GM12878 (cell line): ENCODE measurements at regions of chr19 and their contacts with region 1.

Region 1: DNA sequence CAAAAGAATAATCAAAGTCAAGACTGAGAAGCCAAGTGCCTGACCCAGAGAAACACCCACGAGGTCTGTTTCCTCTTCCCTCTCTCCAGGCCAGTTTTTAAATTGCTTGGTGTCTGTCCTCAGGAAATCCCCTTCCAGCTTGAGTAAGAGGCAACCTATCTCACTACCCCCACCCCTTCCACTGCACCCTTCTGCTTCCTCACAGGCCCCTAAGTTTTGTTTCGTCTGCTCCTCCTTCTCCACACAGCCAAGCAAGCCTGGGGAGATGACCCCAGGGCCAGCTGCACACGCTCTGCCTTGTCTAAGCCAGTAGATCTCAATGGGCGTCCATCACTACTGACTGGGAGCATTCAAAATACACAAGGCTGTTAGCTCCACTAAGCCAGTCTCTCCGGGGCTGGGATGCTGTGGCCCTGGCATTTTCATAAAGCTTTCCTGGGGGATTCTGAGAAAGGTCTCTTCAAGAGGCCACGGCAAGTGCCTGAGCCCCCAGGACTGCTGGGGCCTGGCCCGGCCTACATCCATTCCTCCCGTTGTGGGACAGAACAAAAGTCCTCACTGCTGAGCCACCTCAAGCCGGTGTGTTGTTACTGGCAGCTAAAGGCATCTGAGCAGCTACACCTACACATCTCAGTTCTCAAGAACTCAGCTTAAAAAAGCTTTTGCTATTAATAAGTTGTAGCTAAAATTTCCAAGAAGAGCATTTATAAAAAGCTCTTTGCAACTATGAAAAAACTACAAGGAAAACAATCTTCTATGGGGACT is 14.9 kb upstream of the IL4I1 start:
- DNase-seq: peak; percentile 83
- ATAC-seq: peak; percentile 86
- H3K4me3 ChIP-seq: peak overlapping the region; percentile 49; the same call in 1 of the 2 replicates
- H3K27ac ChIP-seq: peak overlapping the region; percentile 76
- H3K4me1 ChIP-seq: peaks cover 61% of the 10 kb centered on the region
- H3K27me3 ChIP-seq: no peaks in the 10 kb centered on the region
- CTCF ChIP-seq: no peak
- EP300 ChIP-seq: no peak
- POLR2A ChIP-seq: peak; percentile 68
- RAD21 ChIP-seq: 0 out of 2 replicates have a peak, but pooled peaks have one; percentile 1

Region 2: GRCh38 chr19:49889687-49890348 is 21.7 kb before region 1 on chr19:
- CTCF ChIA-PET with region 1: interaction called, 71 read pairs
- POLR2A ChIA-PET with region 1: interaction called, 116 read pairs
- RAD21 ChIA-PET with region 1: interaction called, 26 read pairs
- SMC1A ChIA-PET with region 1: interaction called, 110 read pairs
- in situ Hi-C with region 1: no loop called
- intact Hi-C with region 1: no loop called
- DNase-seq: no peak
- ATAC-seq: peak; percentile 31
- H3K4me3 ChIP-seq: peak overlapping the region; percentile 53; the same call in 1 of the 2 replicates
- H3K27ac ChIP-seq: peak overlapping the region; percentile 18; the same call in 1 of the 2 replicates
- H3K4me1 ChIP-seq: peaks cover 25% of the 10 kb centered on the region
- H3K27me3 ChIP-seq: no peaks in the 10 kb centered on the region
- CTCF ChIP-seq: peak; percentile 64 to 79 (median 71)
- EP300 ChIP-seq: no peak
- POLR2A ChIP-seq: no peak
- RAD21 ChIP-seq: peak; percentile 40

Region 3: DNA sequence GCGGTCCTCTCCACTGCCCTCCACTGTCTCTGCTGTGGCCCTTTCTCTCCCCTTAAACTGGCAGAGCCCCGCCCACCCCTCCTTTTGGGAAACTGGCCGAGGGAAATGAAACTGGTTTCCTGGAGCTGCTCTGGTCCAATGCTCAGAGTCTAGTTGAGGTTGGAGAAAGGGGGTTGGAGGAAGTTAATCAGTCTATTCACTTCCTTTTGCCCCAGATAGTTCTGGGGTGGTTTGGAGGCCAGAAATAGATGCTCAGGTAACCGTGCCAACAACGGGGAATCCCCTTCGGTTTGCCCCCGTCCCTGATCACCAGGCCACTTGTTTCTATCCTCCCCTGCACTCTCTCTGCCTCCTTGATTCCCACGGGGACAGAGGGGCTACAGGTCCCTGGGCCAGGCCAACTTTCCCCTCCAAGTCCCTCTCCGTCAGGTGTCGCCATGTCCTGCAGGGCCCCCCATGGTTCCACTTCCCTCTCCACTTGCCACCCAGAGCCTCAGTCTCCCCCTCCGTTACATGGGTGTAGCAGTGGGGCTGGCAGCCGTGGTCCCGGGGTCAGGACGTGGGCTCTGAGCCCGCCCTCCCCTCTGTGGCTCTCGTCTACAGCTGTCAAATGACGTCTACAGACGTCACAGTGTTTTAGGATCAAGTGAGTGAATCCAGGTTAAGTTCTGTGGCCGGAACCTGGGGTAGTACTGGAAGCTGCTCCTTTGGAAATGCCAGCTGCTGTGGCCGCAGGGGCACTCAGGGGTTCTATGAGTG is 14.5 kb before region 1 on chr19 and contains the start of gene IL4I1:
- CTCF ChIA-PET with region 1: interaction called, 71 read pairs
- POLR2A ChIA-PET with region 1: interaction called, 116 read pairs
- RAD21 ChIA-PET with region 1: interaction called, 38 read pairs
- SMC1A ChIA-PET with region 1: interaction called, 110 read pairs
- in situ Hi-C with region 1: no loop called
- intact Hi-C with region 1: loop called (anchors 1 kb)
- DNase-seq: peak; percentile 96
- ATAC-seq: peak; percentile 57
- H3K4me3 ChIP-seq: peak within 1 kb of the TSS; percentile 77
- H3K27ac ChIP-seq: peak within 1 kb of the TSS; percentile 91
- H3K4me1 ChIP-seq: peaks cover 40% of the 10 kb centered on the region
- H3K27me3 ChIP-seq: no peaks in the 10 kb centered on the region
- CTCF ChIP-seq: no peak
- EP300 ChIP-seq: peak; percentile 42 to 81; a peak in 3 of 4 replicates
- POLR2A ChIP-seq: peak; percentile 69
- RAD21 ChIP-seq: no peak
- polyA plus RNA-seq, gene IL4I1: 0.62 to 1.00 TPM

Region 4: GRCh38 chr19:49921871-49922795 is 10.6 kb after region 1 on chr19:
- CTCF ChIA-PET with region 1: interaction called, 33 read pairs
- POLR2A ChIA-PET with region 1: interaction called, 50 read pairs
- RAD21 ChIA-PET with region 1: interaction called, 40 read pairs
- SMC1A ChIA-PET with region 1: interaction called, 48 read pairs
- in situ Hi-C with region 1: no loop called
- intact Hi-C with region 1: no loop called
- DNase-seq: no peak
- ATAC-seq: peak; percentile 9; the same call in 2 of the 3 replicates
- H3K4me3 ChIP-seq: no peak overlapping the region
- H3K27ac ChIP-seq: peak overlapping the region; percentile 52
- H3K4me1 ChIP-seq: peaks cover 46% of the 10 kb centered on the region
- H3K27me3 ChIP-seq: no peaks in the 10 kb centered on the region
- CTCF ChIP-seq: no peak
- EP300 ChIP-seq: no peak
- POLR2A ChIP-seq: peak; percentile 60
- RAD21 ChIP-seq: no peak

Region 5: DNA sequence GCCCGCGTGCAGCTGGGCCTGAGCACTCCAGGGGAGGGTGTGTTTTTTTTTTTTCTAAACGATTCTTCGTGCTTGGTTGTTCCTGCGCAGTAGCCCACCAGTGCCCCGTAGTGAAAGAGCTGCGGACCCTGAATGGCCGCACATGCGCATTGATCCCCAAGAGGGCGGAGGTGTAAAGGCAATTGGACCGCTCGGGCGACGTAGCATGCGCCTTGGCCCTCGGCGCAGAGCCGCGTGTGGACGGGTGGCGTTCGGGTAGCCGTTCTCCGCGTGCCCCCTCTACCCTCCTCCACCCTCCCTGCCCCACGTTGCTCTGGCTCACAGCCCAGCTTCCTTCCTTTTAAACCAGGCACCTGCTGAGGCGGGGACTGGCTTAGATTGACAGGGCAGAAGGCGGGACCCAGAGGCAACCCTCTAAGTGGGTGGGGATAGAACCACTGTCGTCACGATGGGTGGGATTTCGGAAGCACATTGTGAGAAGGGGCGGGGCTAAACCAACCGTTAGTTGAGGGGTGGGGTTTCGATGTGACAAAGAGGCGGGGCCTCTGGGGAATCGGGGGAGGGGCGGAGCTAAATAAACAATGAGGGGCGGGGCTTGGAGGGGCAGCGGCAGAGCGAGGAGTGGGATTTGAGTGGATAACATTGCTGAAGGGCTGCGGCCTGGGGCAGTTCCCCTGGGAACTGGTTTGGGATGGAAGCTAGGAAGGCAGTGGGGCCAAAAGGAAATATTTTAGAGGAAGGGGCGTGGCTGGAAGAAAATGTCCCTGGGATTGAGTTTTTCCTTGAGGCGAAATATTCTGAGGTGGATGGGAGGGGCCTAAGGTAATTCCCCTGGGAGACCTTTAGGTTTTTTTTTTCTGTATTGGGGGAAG is 18.3 kb after region 1 on chr19:
- CTCF ChIA-PET with region 1: interaction called, 33 read pairs
- POLR2A ChIA-PET with region 1: interaction called, 50 read pairs
- RAD21 ChIA-PET with region 1: interaction called, 40 read pairs
- SMC1A ChIA-PET with region 1: interaction called, 48 read pairs
- in situ Hi-C with region 1: no loop called
- intact Hi-C with region 1: no loop called
- DNase-seq: peak; percentile 90
- ATAC-seq: peak; percentile 83
- H3K4me3 ChIP-seq: peak overlapping the region; percentile 92
- H3K27ac ChIP-seq: peak overlapping the region; percentile 94
- H3K4me1 ChIP-seq: peaks cover 15% of the 10 kb centered on the region
- H3K27me3 ChIP-seq: no peaks in the 10 kb centered on the region
- CTCF ChIP-seq: no peak
- EP300 ChIP-seq: no peak
- POLR2A ChIP-seq: peak; percentile 94
- RAD21 ChIP-seq: no peak

Region 6: GRCh38 chr19:49954079-49954829 is 42.7 kb after region 1 on chr19:
- CTCF ChIA-PET with region 1: no interaction called
- POLR2A ChIA-PET with region 1: no interaction called
- RAD21 ChIA-PET with region 1: no interaction called
- SMC1A ChIA-PET with region 1: no interaction called
- in situ Hi-C with region 1: no loop called
- intact Hi-C with region 1: no loop called
- DNase-seq: no peak
- ATAC-seq: no peak
- H3K4me3 ChIP-seq: peak overlapping the region; percentile 8; the same call in 1 of the 2 replicates
- H3K27ac ChIP-seq: no peak overlapping the region
- H3K4me1 ChIP-seq: peaks cover 17% of the 10 kb centered on the region
- H3K27me3 ChIP-seq: no peaks in the 10 kb centered on the region; a peak in 1 of 4 replicates
- CTCF ChIP-seq: no peak
- EP300 ChIP-seq: no peak
- POLR2A ChIP-seq: no peak
- RAD21 ChIP-seq: no peak

Region 7: GRCh38 chr19:49983645-49984229 is 72.2 kb after region 1 on chr19:
- CTCF ChIA-PET with region 1: no interaction called
- POLR2A ChIA-PET with region 1: no interaction called
- RAD21 ChIA-PET with region 1: no interaction called
- SMC1A ChIA-PET with region 1: no interaction called
- in situ Hi-C with region 1: no loop called
- intact Hi-C with region 1: no loop called
- DNase-seq: peak; percentile 19
- ATAC-seq: peak; percentile 96
- H3K4me3 ChIP-seq: no peak overlapping the region
- H3K27ac ChIP-seq: no peak overlapping the region
- H3K4me1 ChIP-seq: no peaks in the 10 kb centered on the region
- H3K27me3 ChIP-seq: no peaks in the 10 kb centered on the region
- CTCF ChIP-seq: peak; percentile 90 to 93 (median 92)
- EP300 ChIP-seq: no peak
- POLR2A ChIP-seq: no peak
- RAD21 ChIP-seq: peak; percentile 95